ENCODE measurements at regions of chr4 and their contacts with region 1.

Region 1: GRCh38 chr4:1351854-1352633 is 5.0 kb downstream of the UVSSA start:
- DNase-seq: no peak
- H3K4me3 ChIP-seq: no peak overlapping the region
- CTCF ChIP-seq: peak; percentile 96

Region 2: DNA sequence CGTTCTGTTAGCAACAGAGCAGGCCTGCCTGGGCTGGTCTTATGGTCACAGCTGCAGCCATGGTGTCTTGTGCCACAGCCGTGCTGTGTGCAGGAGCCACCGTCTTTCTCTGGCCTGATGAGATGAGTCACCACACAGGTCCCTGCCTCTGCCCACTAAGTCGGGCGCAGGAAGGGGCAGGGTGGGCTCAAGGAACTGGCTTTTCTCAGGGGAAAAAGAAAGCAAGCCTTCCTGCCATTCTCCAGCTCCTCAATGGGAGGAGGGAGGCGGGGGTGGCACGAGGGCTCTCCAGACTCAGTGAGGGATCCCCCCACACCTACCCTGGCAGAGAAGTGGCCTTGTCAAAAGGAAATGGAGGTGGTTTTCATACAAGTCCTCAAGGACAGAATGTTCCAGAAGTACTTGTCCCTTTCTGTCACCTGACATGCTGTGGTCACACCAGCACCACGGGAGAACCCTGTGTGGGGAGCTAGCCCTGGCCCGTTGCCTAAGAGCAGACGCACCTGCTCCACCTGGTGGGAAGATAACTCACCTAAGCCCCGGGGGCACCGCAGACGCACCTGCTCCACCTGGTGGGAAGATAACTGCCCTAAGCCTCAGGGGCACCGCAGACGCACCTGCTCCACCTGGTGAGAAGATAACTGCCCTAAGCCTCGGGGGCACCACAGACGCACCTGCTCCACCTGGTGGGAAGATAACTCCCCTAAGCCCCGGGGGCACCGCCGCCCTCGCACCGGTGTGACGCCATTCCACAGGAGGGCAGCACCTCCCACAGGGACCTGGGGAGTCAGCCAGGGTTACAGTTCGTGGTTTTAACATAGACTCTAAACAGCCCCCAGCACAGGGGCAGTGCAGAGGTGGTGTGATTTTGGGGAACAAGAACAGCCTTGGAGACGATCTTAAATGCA is 13.5 kb after region 1 on chr4:
- CTCF ChIA-PET with region 1: interaction called, 55 read pairs
- POLR2A ChIA-PET with region 1: no interaction called
- DNase-seq: no peak
- H3K4me3 ChIP-seq: no peak overlapping the region
- CTCF ChIP-seq: no peak

Region 3: DNA sequence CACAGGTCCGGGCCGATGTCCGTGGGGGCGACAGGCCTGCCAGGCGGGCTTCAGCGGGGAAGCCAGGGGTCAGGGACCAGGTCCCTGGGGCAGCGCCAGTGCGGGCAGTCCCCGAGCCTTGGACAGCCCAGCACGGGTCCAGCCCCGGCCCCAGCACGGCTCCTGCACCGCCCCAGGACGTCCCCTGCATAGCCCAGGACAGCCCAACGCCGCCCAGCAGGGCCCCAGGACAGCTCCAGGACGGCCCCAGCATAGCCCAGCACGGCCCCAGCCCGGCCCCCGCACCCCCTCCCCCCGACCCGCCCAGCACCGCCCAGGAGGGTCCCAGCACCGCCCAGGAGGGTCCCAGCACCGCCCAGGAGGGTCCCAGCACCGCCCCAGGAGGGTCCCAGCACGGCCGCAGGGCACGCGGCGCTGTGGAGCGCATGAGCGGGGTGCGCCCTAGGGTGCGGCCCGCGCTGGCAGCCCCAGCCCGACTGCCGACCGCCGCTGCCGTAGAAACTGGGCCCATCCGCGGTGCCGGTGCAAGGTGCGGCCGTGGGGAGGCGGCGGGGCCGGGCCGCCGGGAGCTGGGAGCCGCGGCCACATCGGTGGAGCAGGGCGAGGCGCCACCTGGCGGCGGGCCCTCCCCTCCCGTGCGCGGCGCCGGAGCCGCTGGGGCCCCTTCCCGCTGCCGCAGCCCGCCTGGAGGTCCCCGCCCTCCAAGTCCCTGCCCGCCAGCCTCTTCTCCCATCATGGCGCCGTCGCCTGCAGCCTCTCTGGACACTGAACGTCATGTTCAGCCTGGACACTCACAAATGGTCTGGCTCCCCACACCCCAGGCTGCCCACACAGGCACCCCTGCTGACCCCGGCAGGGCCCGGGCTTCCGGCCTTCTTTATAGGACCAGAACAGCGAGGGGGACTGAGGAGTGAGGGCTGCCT is 161.0 kb after region 1 on chr4:
- CTCF ChIA-PET with region 1: interaction called, 31 read pairs
- POLR2A ChIA-PET with region 1: no interaction called
- DNase-seq: no peak
- H3K4me3 ChIP-seq: no peak overlapping the region
- CTCF ChIP-seq: peak; percentile 45

Region 4: GRCh38 chr4:1547856-1548826 is 196.1 kb after region 1 on chr4:
- CTCF ChIA-PET with region 1: interaction called, 22 read pairs
- POLR2A ChIA-PET with region 1: no interaction called
- DNase-seq: no peak
- H3K4me3 ChIP-seq: no peak overlapping the region
- CTCF ChIP-seq: no peak

Region 5: GRCh38 chr4:1628892-1629698 is 277.1 kb after region 1 on chr4:
- CTCF ChIA-PET with region 1: interaction called, 106 read pairs
- POLR2A ChIA-PET with region 1: no interaction called
- DNase-seq: no peak
- H3K4me3 ChIP-seq: no peak overlapping the region
- CTCF ChIP-seq: peak; percentile 97

Measured in AG04449 (cell line).